Mammary epithelial cell (primary cell): ENCODE measurements at regions of chr3 and their contacts with region 1.

Region 1: GRCh38 chr3:177359593-177360357 is 162.5 kb upstream of the TBL1XR1 start:
- DNase-seq: peak; percentile 97
- H3K4me3 ChIP-seq: peak overlapping the region in 2 of 3 experiments; percentile 26 to 35
- H3K27ac ChIP-seq: peak overlapping the region; percentile 57
- H3K4me1 ChIP-seq: peaks cover 44% of the 10 kb centered on the region
- H3K27me3 ChIP-seq: no peaks in the 10 kb centered on the region
- CTCF ChIP-seq: no peak

Region 2: GRCh38 chr3:177197041-177197727 is 162.6 kb before region 1 on chr3 and contains the start of gene TBL1XR1:
- CTCF ChIA-PET with region 1: no interaction called
- dilution Hi-C with region 1: loop called (anchors 5 kb)
- in situ Hi-C with region 1: loop called (anchors 10 to 25 kb)
- intact Hi-C with region 1: loop called (anchors 1 kb)
- DNase-seq: peak; percentile 88
- H3K4me3 ChIP-seq: peak within 1 kb of the TSS; percentile 55 to 98 (median 95)
- H3K27ac ChIP-seq: peak within 1 kb of the TSS; percentile 98
- H3K4me1 ChIP-seq: peaks cover 12% of the 10 kb centered on the region
- H3K27me3 ChIP-seq: no peaks in the 10 kb centered on the region
- CTCF ChIP-seq: no peak
- total RNA-seq, gene TBL1XR1: 157 to 187 TPM

Region 3: GRCh38 chr3:177306252-177306651 is 53.5 kb before region 1 on chr3:
- CTCF ChIA-PET with region 1: no interaction called
- dilution Hi-C with region 1: no loop called
- in situ Hi-C with region 1: no loop called
- intact Hi-C with region 1: loop called (anchors 5 kb)
- DNase-seq: peak; percentile 82
- H3K4me3 ChIP-seq: no peak overlapping the region
- H3K27ac ChIP-seq: peak overlapping the region; percentile 44
- H3K4me1 ChIP-seq: peaks cover 10% of the 10 kb centered on the region
- H3K27me3 ChIP-seq: no peaks in the 10 kb centered on the region
- CTCF ChIP-seq: no peak

Region 4: GRCh38 chr3:177478170-177478860 is 118.5 kb after region 1 on chr3:
- CTCF ChIA-PET with region 1: no interaction called
- dilution Hi-C with region 1: no loop called
- in situ Hi-C with region 1: no loop called
- intact Hi-C with region 1: loop called (anchors 1 kb)
- DNase-seq: peak; percentile 99
- H3K4me3 ChIP-seq: no peak overlapping the region
- H3K27ac ChIP-seq: peak overlapping the region; percentile 91
- H3K4me1 ChIP-seq: peaks cover 10% of the 10 kb centered on the region
- H3K27me3 ChIP-seq: no peaks in the 10 kb centered on the region
- CTCF ChIP-seq: no peak

Region 5: DNA sequence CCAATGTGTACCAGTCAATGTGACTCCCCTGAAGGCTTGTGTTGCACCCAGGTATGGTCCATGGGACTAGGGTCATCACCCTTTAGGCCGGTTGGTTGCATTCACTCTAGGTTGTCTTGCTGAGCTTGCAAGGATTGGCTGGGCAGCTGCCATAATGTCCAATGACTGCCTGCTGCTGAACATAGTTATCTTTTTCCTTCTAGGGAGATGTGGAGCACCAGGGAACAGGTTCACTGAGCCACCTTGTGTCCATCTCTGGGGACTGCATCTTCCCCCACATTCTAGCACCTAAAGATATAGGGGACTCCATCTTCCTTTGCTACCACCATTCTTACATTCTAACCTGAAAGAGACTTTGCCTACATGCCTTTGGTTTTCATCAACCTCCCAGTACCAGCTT is 417.9 kb after region 1 on chr3:
- CTCF ChIA-PET with region 1: no interaction called
- dilution Hi-C with region 1: no loop called
- in situ Hi-C with region 1: no loop called
- intact Hi-C with region 1: loop called (anchors 1 kb)
- DNase-seq: peak; percentile 68
- H3K4me3 ChIP-seq: no peak overlapping the region
- H3K27ac ChIP-seq: no peak overlapping the region
- H3K4me1 ChIP-seq: peaks cover 25% of the 10 kb centered on the region
- H3K27me3 ChIP-seq: no peaks in the 10 kb centered on the region
- CTCF ChIP-seq: peak; percentile 77 to 84